Activated T-helper 2 cell treated with anti-CD3 and anti-CD28 coated beads, Interferon-gamma antibody, Interleukin-2, Interleukin-4, amounts not matched to agents 10 μg/mL and 5 μg/mL and 100 μg/mL, durations not matched to agents 14 hours and 24 hours and 36 hours (primary cell): ENCODE measurements at regions of chr5 and their contacts with region 1.

Region 1: DNA sequence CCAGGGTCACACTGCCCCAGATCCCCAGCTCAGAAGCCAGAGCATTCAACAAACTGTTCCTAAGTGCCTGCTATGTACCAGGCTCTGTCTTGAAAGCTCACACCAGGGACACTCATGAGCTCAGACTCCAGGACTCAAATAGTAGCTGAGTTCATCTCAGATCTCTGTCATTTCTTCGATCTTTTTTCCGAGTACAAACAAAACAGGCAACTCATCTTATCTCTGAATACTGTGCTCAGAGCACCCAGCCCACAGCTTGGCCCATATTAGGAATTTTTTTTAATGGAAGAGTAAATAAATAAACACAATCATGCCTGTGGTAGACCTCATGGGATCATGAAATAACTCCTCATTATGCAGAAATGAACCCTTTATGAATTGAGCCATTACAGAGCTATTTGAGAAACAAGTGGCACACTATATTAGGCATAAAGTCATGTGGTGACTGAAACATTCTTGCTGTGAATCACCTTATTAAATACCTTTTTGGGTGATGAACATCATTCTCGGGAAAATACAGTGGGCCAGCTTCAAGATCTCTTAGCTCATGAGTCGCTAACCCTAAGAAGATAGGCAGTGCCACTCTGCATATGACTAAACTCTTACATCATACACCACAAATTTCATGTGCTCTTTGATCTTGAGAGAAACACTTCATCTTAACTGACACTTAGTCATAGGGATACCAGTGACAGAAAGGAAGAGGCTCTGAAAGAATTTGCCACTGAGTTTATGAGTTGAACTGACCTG is 9.9 kb downstream of the SH3RF2 start:
- DNase-seq: no peak
- H3K4me3 Mint-ChIP-seq: peak overlapping the region; percentile 14
- H3K27ac Mint-ChIP-seq: peak overlapping the region; percentile 66
- H3K4me1 Mint-ChIP-seq: peaks cover 48% of the 10 kb centered on the region
- H3K27me3 Mint-ChIP-seq: peaks cover 21% of the 10 kb centered on the region

Region 2: GRCh38 chr5:145743396-145744061 is 202.8 kb before region 1 on chr5:
- intact Hi-C with region 1: loop called (anchors 5 kb)
- DNase-seq: peak; percentile 11
- H3K4me3 Mint-ChIP-seq: no peak overlapping the region
- H3K27ac Mint-ChIP-seq: no peak overlapping the region
- H3K4me1 Mint-ChIP-seq: no peaks in the 10 kb centered on the region
- H3K27me3 Mint-ChIP-seq: no peaks in the 10 kb centered on the region